AG04450 (cell line): ENCODE measurements at regions of chr5 and their contacts with region 1.

Region 1: DNA sequence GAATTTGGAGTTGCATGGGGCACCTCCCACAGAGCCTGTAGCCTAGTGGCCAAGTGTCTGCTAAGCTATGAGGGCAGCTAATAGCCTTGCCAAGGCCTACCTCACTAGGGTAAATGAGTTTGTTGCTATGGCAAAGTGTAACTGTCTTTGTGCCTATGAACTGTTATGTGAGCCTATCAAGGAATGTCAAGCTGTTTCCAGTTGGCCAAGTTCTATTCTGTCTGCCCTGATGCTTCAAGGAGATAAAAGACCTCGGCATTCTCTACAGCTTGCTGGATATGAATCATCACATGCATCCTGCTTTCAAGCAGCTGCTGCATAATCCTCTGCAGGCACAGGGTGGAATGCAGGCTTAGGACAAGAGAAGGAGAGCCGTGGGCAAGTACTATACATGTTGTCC is 69.8 kb upstream of the CCDC112 start:
- DNase-seq: peak; percentile 82
- H3K4me3 ChIP-seq: no peak overlapping the region
- H3K27ac ChIP-seq: peak overlapping the region; percentile 52
- H3K27me3 ChIP-seq: no peaks in the 10 kb centered on the region
- CTCF ChIP-seq: no peak

Region 2: GRCh38 chr5:115262321-115263077 is 103.7 kb before region 1 on chr5 and contains the start of gene PGGT1B:
- CTCF ChIA-PET with region 1: no interaction called
- POLR2A ChIA-PET with region 1: no interaction called
- DNase-seq: no peak
- H3K4me3 ChIP-seq: peak within 1 kb of the TSS; percentile 84
- H3K27ac ChIP-seq: peak within 1 kb of the TSS; percentile 89
- H3K27me3 ChIP-seq: no peaks in the 10 kb centered on the region
- CTCF ChIP-seq: no peak
- polyA plus RNA-seq, gene PGGT1B: 4.1 and 4.3 TPM in 2 replicates

Region 3: DNA sequence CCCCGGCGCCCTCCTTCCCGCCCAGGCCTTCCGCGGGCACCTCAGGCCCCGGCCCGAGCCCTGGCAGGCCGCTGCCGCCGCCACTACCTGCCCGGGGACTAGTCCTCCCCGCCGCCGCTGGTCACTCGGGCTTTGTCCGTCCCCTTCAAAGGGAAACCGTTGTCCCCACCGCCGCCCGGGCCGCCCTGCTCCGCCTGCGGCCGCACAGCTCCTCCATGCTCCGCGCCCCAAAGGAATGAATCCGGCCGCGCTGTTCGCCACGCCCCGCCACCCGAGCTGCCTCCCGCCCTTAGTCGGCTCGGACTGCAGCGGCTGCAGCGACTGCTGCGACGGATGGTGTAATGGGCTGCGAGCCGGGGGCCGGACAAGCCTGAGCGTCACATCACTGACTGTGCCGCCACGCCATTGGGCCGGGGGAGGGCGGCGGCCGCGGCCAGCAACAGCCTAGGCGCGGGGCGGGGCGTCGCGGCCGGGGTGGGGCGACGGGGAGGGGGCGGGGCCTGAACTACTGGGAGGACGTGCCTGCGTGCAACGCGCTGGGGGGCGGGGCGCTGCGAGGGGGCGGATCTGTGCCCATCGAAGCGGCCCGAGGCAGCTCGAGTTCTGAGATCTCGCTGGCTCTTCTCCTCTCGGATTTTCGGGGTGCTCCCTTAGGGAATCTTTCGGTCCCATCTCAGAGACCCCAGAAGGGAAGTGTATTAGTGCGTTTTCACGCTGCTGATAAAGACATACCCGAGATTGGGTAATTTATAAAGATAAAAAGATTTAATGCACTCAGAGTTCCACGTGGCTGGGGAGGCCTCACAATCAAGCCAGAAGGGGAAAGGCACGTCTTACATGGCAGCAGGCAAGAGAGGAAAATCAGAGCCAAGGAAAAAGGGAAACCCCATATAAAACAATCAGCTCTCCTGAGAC is 178.5 kb after region 1 on chr5 and contains the start of gene FEM1C:
- CTCF ChIA-PET with region 1: no interaction called
- POLR2A ChIA-PET with region 1: interaction called, 10 read pairs
- DNase-seq: peak; percentile 94
- H3K4me3 ChIP-seq: peak within 1 kb of the TSS; percentile 83
- H3K27ac ChIP-seq: peak within 1 kb of the TSS; percentile 80
- H3K27me3 ChIP-seq: no peaks in the 10 kb centered on the region
- CTCF ChIP-seq: no peak
- polyA plus RNA-seq, gene FEM1C: 10.7 and 14.1 TPM in 2 replicates